ENCODE measurements at regions of chr20 and their contacts with region 1.

Region 1: DNA sequence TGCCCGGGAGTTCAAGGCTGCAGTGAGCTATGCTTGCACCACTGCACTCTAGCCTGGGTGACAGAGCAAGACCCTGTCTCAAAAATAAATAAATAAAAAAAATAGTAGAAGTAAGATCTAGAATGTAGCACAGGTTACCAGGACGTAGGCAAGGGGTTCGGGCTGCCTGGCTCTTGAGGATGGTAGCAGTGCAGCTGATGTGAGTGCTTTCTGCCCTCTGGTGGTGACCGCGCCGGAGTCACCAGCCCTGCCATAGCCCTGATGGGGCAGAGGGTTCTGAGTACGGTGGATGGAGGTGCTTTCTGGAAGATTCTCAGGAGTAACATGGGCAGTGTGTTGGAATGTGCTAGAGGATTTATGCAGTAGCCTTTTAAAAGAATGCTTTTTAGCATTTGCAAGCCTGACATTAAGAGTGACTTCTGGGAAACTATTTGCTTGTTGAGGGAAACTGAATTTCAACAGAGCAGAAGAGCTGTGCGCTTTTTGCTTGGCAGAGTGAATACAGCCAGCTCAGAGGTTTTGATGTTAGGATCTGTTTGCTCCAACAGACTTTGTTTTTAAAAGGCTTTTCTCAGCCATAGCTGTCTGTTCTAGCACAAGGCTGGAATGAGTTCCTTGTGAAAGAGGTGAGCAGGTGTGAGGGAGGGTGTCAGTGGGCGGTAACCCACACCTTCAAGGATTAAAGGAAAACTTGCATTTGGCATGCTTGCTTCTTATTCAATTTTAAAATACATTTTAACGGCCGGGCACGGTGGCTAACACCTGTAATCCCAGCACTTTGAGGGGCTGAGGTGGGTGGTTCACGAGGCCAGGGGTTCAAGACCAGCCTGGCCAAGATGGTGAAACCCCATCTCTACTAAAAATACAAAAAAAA is 65.9 kb downstream of the PTPN1 start:
- DNase-seq: peak; percentile 18 to 73 (median 55)
- ATAC-seq: peak; percentile 82 to 89 (median 86)
- H3K4me3 ChIP-seq: no peak overlapping the region
- H3K4me3 Mint-ChIP-seq: no peak overlapping the region
- H3K27ac ChIP-seq: no peak overlapping the region
- H3K27ac Mint-ChIP-seq: peak overlapping the region; percentile 71
- H3K4me1 ChIP-seq: peaks cover 0 to 5% of the 10 kb centered on the region in 2 experiments
- H3K4me1 Mint-ChIP-seq: peaks cover 32 to 38% (median 32%) of the 10 kb centered on the region in 3 donors
- H3K27me3 ChIP-seq: no peaks in the 10 kb centered on the region
- H3K27me3 Mint-ChIP-seq: no peaks in the 10 kb centered on the region

Region 2: GRCh38 chr20:50189681-50190582 is 386.2 kb before region 1 on chr20:
- CTCF ChIA-PET with region 1: no interaction called
- POLR2A ChIA-PET with region 1: interaction called in 1 of 2 experiments, 12 read pairs
- DNase-seq: peak; percentile 50 to 86 (median 74)
- ATAC-seq: peak; percentile 51 to 68 (median 64)
- H3K4me3 ChIP-seq: peak overlapping the region; percentile 11 to 67
- H3K4me3 Mint-ChIP-seq: peak overlapping the region; percentile 49 to 87 (median 67)
- H3K27ac ChIP-seq: no peak overlapping the region
- H3K27ac Mint-ChIP-seq: peak overlapping the region; percentile 11 to 25
- H3K4me1 ChIP-seq: peaks cover 9 to 36% of the 10 kb centered on the region in 2 experiments
- H3K4me1 Mint-ChIP-seq: peaks cover 21 to 30% (median 29%) of the 10 kb centered on the region in 3 donors
- H3K27me3 ChIP-seq: peaks cover 0 to 12% of the 10 kb centered on the region in 2 experiments
- H3K27me3 Mint-ChIP-seq: peaks cover 8 to 10% of the 10 kb centered on the region in 2 donors

Region 3: GRCh38 chr20:50267041-50267865 is 308.8 kb before region 1 on chr20:
- CTCF ChIA-PET with region 1: no interaction called
- POLR2A ChIA-PET with region 1: no interaction called
- DNase-seq: no peak
- ATAC-seq: no peak
- H3K4me3 ChIP-seq: no peak overlapping the region
- H3K4me3 Mint-ChIP-seq: no peak overlapping the region
- H3K27ac ChIP-seq: no peak overlapping the region
- H3K27ac Mint-ChIP-seq: no peak overlapping the region
- H3K4me1 ChIP-seq: peaks cover 0 to 11% of the 10 kb centered on the region in 2 experiments
- H3K4me1 Mint-ChIP-seq: peaks cover 0 to 6% (median 0%) of the 10 kb centered on the region in 3 donors
- H3K27me3 ChIP-seq: peaks cover 0 to 35% of the 10 kb centered on the region in 2 experiments
- H3K27me3 Mint-ChIP-seq: peaks cover 13 to 19% of the 10 kb centered on the region in 2 donors

Region 4: DNA sequence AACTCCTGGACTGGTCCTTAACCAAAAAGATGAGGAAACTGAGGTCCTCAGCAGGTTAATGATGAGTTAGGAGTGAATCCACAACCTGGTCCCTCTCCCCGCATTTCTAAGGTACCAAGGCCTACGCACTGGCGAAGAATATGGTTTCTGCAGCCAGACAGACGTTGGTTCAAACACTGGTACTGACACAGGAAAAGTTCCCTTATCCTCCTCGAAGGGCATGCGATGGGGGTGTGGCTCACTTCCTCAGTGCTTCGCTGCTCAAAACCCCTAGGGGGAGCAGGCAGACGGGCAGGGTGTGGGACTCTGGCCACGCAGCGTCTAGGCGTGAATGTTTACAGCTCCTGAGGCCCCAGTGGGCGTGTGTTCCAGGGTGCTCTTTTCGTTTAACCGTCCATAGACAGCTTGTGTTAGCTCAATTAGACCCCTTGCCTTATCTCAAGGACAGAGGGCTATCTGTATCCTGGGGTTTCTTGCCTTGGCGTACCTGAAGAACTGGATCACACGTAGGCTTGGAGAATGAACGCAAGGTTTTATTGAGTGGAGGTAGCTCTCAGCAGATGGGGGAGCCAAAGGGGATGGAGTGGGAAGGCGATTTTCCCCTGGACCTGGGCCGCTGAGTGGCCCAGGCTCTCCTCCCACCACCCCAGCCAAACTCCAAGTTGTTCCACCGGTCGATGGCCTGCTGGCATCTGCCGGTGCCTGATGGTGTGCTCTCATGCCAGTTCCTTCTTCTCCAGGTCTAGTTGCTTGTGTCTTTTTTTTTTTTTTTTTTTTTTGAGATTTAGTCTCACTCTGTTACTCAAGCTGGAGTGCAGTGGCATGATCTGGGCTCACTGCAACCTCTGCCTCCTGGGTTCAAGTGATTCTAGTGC is 97.7 kb before region 1 on chr20:
- CTCF ChIA-PET with region 1: interaction called, 3 to 16 read pairs
- POLR2A ChIA-PET with region 1: no interaction called
- DNase-seq: peak; percentile 52 to 83 (median 70)
- ATAC-seq: peak; percentile 99 to 100 (median 100)
- H3K4me3 ChIP-seq: no peak overlapping the region
- H3K4me3 Mint-ChIP-seq: no peak overlapping the region
- H3K27ac ChIP-seq: no peak overlapping the region
- H3K27ac Mint-ChIP-seq: no peak overlapping the region
- H3K4me1 ChIP-seq: peaks cover 0 to 16% of the 10 kb centered on the region in 2 experiments
- H3K4me1 Mint-ChIP-seq: peaks cover 23 to 26% (median 25%) of the 10 kb centered on the region in 3 donors
- H3K27me3 ChIP-seq: no peaks in the 10 kb centered on the region
- H3K27me3 Mint-ChIP-seq: no peaks in the 10 kb centered on the region

Region 5: GRCh38 chr20:50504231-50504823 is 71.8 kb before region 1 on chr20:
- CTCF ChIA-PET with region 1: interaction called in 1 of 2 experiments, 13 read pairs
- POLR2A ChIA-PET with region 1: no interaction called
- DNase-seq: peak in 1 of 35 experiments; percentile 45
- ATAC-seq: peak in 3 of 4 experiments; percentile 52 to 72 (median 58)
- H3K4me3 ChIP-seq: no peak overlapping the region
- H3K4me3 Mint-ChIP-seq: no peak overlapping the region
- H3K27ac ChIP-seq: no peak overlapping the region
- H3K27ac Mint-ChIP-seq: peak overlapping the region in 1 of 2 donors; percentile 34
- H3K4me1 ChIP-seq: peaks cover under 1 to 4% of the 10 kb centered on the region in 2 experiments
- H3K4me1 Mint-ChIP-seq: peaks cover 5 to 10% (median 8%) of the 10 kb centered on the region in 3 donors
- H3K27me3 ChIP-seq: no peaks in the 10 kb centered on the region
- H3K27me3 Mint-ChIP-seq: no peaks in the 10 kb centered on the region